ENCODE measurements at regions of chr3 and their contacts with region 1.

Region 1: GRCh38 chr3:192825657-192826200 is 91.9 kb downstream of the MB21D2 start:
- DNase-seq: no peak
- ATAC-seq: peak; percentile 35
- H3K4me3 ChIP-seq: no peak overlapping the region
- H3K27ac ChIP-seq: no peak overlapping the region
- H3K4me1 ChIP-seq: peaks cover 32% of the 10 kb centered on the region
- H3K27me3 ChIP-seq: no peaks in the 10 kb centered on the region
- CTCF ChIP-seq: peak; percentile 30; the same call in 1 of the 2 replicates

Region 2: DNA sequence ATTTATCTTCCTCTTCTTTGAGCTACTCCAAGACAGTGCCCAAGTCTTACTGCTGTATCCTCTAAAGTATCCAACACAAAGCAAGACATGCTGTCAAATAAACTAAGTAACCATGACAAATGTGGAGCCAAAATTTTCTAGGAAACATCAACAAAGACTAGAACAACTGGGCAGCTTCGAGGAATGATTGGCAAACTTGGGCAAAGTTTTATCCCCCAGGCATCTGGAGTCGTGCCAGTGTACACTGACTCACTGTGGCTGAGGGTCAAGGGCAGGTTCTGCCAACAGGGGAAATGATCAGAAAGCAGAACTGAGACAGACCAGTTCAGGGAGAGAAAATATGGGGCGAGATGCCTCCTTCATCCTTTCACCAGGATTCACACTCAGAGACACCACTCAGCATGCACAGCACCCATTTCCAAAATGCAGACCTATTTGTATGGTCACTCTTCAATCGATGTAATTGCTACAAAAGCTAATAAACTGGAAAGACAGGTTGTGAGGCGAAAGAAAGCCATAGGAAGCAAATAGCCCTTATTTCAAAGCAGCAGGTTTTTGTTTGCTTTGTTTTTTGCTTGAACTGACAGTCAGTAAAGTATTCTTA is 26.2 kb after region 1 on chr3:
- CTCF ChIA-PET with region 1: no interaction called
- POLR2A ChIA-PET with region 1: no interaction called
- intact Hi-C with region 1: loop called (anchors 2 kb)
- DNase-seq: peak; percentile 99
- ATAC-seq: peak; percentile 62
- H3K4me3 ChIP-seq: peak overlapping the region; percentile 27; the same call in 1 of the 2 replicates
- H3K27ac ChIP-seq: peak overlapping the region; percentile 75
- H3K4me1 ChIP-seq: peaks cover 54% of the 10 kb centered on the region
- H3K27me3 ChIP-seq: no peaks in the 10 kb centered on the region
- CTCF ChIP-seq: no peak

Region 3: GRCh38 chr3:192929755-192930547 is 104.2 kb after region 1 on chr3:
- CTCF ChIA-PET with region 1: no interaction called
- POLR2A ChIA-PET with region 1: interaction called, 24 read pairs
- intact Hi-C with region 1: no loop called
- DNase-seq: no peak
- ATAC-seq: no peak
- H3K4me3 ChIP-seq: no peak overlapping the region
- H3K27ac ChIP-seq: peak overlapping the region; percentile 79
- H3K4me1 ChIP-seq: peaks cover 46% of the 10 kb centered on the region
- H3K27me3 ChIP-seq: no peaks in the 10 kb centered on the region
- CTCF ChIP-seq: no peak